MCF 10A (cell line): ENCODE measurements at regions of chr10 and their contacts with region 1.

Region 1: GRCh38 chr10:95246579-95247051 is 44.2 kb downstream of the PDLIM1 start:
- DNase-seq: peak; percentile 78
- H3K4me3 Mint-ChIP-seq: no peak overlapping the region
- H3K27ac Mint-ChIP-seq: no peak overlapping the region
- H3K4me1 Mint-ChIP-seq: peaks cover 27% of the 10 kb centered on the region
- H3K27me3 Mint-ChIP-seq: no peaks in the 10 kb centered on the region
- CTCF ChIP-seq: peak; percentile 81

Region 2: DNA sequence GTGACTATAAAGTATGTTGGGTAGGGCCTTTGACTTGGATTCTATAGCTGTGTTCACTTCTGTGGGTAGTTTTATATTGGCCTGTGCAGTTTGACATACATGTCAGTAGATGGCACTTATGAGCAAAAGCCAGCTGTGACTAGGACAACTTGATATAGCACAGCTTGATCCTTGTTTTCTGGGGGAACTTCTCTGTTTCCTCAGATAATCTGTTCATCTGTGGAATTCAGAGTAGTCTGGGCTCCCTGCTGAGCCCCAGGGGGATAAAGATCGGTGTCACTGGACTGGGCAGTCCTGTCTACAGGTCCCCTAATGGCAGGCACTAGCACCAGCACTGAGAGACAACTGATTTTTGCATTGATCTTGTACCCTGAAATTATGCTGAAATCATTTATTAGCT is 282.7 kb before region 1 on chr10:
- CTCF ChIA-PET with region 1: interaction called, 24 read pairs
- POLR2A ChIA-PET with region 1: no interaction called
- intact Hi-C with region 1: loop called (anchors 5 kb)
- DNase-seq: peak; percentile 51
- H3K4me3 Mint-ChIP-seq: no peak overlapping the region
- H3K27ac Mint-ChIP-seq: no peak overlapping the region
- H3K4me1 Mint-ChIP-seq: no peaks in the 10 kb centered on the region
- H3K27me3 Mint-ChIP-seq: no peaks in the 10 kb centered on the region
- CTCF ChIP-seq: peak; percentile 56

Region 3: DNA sequence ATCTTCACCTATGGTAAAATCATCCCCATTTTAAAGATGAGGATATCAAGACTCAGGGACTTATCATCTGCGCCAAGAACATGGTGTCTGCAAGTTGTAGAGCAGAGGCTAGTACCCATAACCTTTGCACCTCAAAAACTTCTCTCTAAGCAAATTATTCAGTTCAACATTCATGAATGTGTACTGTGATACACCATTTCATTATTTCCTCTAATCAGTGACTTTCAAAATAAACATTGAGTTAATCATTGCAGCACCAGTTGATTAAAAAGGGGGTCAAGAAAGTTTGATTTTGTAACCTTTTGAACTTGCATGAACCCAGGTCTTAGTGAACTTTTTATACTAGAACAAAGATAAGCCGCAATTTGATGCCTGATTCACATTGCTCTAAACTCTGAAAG is 129.7 kb before region 1 on chr10:
- CTCF ChIA-PET with region 1: no interaction called
- POLR2A ChIA-PET with region 1: no interaction called
- intact Hi-C with region 1: no loop called
- DNase-seq: no peak
- H3K4me3 Mint-ChIP-seq: no peak overlapping the region
- H3K27ac Mint-ChIP-seq: no peak overlapping the region
- H3K4me1 Mint-ChIP-seq: no peaks in the 10 kb centered on the region
- H3K27me3 Mint-ChIP-seq: no peaks in the 10 kb centered on the region
- CTCF ChIP-seq: no peak

Region 4: GRCh38 chr10:95201736-95202135 is 44.9 kb before region 1 on chr10:
- CTCF ChIA-PET with region 1: interaction called, 21 read pairs
- POLR2A ChIA-PET with region 1: interaction called, 3 read pairs
- intact Hi-C with region 1: loop called (anchors 1 kb)
- DNase-seq: peak; percentile 86
- H3K4me3 Mint-ChIP-seq: no peak overlapping the region
- H3K27ac Mint-ChIP-seq: no peak overlapping the region
- H3K4me1 Mint-ChIP-seq: no peaks in the 10 kb centered on the region
- H3K27me3 Mint-ChIP-seq: peaks cover 13% of the 10 kb centered on the region
- CTCF ChIP-seq: peak; percentile 57

Region 5: GRCh38 chr10:95236068-95236903 is 10.3 kb before region 1 on chr10:
- CTCF ChIA-PET with region 1: interaction called, 36 read pairs
- POLR2A ChIA-PET with region 1: no interaction called
- intact Hi-C with region 1: no loop called
- DNase-seq: peak; percentile 66
- H3K4me3 Mint-ChIP-seq: peak overlapping the region; percentile 46
- H3K27ac Mint-ChIP-seq: peak overlapping the region; percentile 87
- H3K4me1 Mint-ChIP-seq: peaks cover 13% of the 10 kb centered on the region
- H3K27me3 Mint-ChIP-seq: no peaks in the 10 kb centered on the region
- CTCF ChIP-seq: no peak

Region 6: GRCh38 chr10:95290461-95291364 is 44.1 kb after region 1 on chr10 and contains the start of gene PDLIM1:
- CTCF ChIA-PET with region 1: interaction called, 14 read pairs
- POLR2A ChIA-PET with region 1: interaction called, 5 read pairs
- intact Hi-C with region 1: loop called (anchors 1 kb)
- DNase-seq: peak; percentile 56
- H3K4me3 Mint-ChIP-seq: peak within 1 kb of the TSS; percentile 87
- H3K27ac Mint-ChIP-seq: peak within 1 kb of the TSS; percentile 46
- H3K4me1 Mint-ChIP-seq: peaks cover 18% of the 10 kb centered on the region
- H3K27me3 Mint-ChIP-seq: no peaks in the 10 kb centered on the region
- CTCF ChIP-seq: peak; percentile 21
- total RNA-seq, gene PDLIM1: 74.6 and 98.1 TPM in 2 replicates

Region 7: DNA sequence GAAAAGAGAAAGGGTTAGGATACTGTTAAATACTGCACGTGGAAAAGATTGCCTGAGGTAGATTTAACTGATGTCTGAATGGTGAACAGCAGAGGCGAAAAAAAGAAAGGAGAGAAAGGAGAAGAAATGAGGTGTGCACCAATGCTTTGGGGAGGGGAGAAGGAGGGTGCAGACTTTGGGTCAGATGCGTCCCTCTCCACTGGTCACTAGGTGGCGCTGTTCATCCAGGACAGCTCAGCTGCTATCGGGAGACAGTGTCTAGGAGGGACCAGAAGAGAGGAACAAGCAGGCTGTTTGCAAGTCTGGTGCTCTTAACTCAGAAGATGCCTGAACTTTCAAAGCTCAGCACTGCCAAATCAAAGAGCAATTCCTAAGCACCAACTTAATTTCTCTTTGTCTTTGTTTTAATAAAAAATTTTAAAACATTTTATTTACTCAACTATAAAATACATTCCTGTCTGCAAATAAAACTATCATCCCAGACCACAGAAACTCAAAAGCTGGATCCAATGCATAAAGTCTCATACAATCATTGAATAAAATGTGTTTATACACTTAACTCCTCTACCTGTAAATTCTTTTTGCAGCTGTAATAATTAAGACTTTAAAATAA is 128.1 kb after region 1 on chr10:
- CTCF ChIA-PET with region 1: interaction called, 713 read pairs
- POLR2A ChIA-PET with region 1: no interaction called
- intact Hi-C with region 1: no loop called
- DNase-seq: peak; percentile 88
- H3K4me3 Mint-ChIP-seq: no peak overlapping the region
- H3K27ac Mint-ChIP-seq: no peak overlapping the region
- H3K4me1 Mint-ChIP-seq: no peaks in the 10 kb centered on the region
- H3K27me3 Mint-ChIP-seq: peaks cover 29% of the 10 kb centered on the region
- CTCF ChIP-seq: peak; percentile 95

Region 8: GRCh38 chr10:95459446-95460045 is 212.9 kb after region 1 on chr10:
- CTCF ChIA-PET with region 1: no interaction called
- POLR2A ChIA-PET with region 1: no interaction called
- intact Hi-C with region 1: no loop called
- DNase-seq: no peak
- H3K4me3 Mint-ChIP-seq: no peak overlapping the region
- H3K27ac Mint-ChIP-seq: no peak overlapping the region
- H3K4me1 Mint-ChIP-seq: no peaks in the 10 kb centered on the region
- H3K27me3 Mint-ChIP-seq: no peaks in the 10 kb centered on the region
- CTCF ChIP-seq: no peak

Region 9: GRCh38 chr10:96176985-96177384 is 930.4 kb after region 1 on chr10:
- CTCF ChIA-PET with region 1: no interaction called
- POLR2A ChIA-PET with region 1: no interaction called
- intact Hi-C with region 1: no loop called
- DNase-seq: no peak
- H3K4me3 Mint-ChIP-seq: no peak overlapping the region
- H3K27ac Mint-ChIP-seq: no peak overlapping the region
- H3K4me1 Mint-ChIP-seq: no peaks in the 10 kb centered on the region
- H3K27me3 Mint-ChIP-seq: no peaks in the 10 kb centered on the region
- CTCF ChIP-seq: no peak